ENCODE measurements at regions of chr7 and their contacts with region 1.

Region 1: GRCh38 chr7:30412810-30413504 is 65.6 kb downstream of the NOD1 start:
- DNase-seq: peak; percentile 68
- ATAC-seq: peak; percentile 97
- H3K4me3 ChIP-seq: no peak overlapping the region
- H3K27ac ChIP-seq: no peak overlapping the region
- H3K4me1 ChIP-seq: no peaks in the 10 kb centered on the region; a peak in 1 of 4 replicates
- H3K27me3 ChIP-seq: no peaks in the 10 kb centered on the region
- CTCF ChIP-seq: peak; percentile 34 to 77 (median 66); a peak in 5 of 6 replicates
- POLR2A ChIP-seq: no peak
- RAD21 ChIP-seq: peak; percentile 90

Region 2: DNA sequence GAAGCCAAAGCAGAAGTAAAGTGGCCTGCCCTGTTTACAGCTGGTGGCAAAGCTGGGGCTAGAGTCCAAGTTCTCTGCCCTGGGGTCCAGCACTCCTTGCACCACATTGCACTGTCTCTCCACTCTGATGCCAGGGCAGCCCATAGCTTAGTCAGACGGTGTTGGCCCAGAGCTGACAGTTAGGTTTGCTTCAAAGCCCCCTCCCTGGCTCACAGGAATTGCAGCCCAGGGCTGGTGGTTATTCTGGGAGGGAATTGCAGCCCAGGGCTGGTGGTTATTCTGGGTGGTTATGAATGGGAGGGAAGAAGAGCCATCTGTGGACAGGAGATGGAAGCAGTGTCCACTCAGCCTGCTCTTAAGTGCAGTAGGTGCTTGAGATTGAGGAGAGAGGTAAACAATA is 512.2 kb before region 1 on chr7:
- CTCF ChIA-PET with region 1: no interaction called
- POLR2A ChIA-PET with region 1: no interaction called
- RAD21 ChIA-PET with region 1: no interaction called
- intact Hi-C with region 1: no loop called
- DNase-seq: no peak
- ATAC-seq: no peak
- H3K4me3 ChIP-seq: no peak overlapping the region
- H3K27ac ChIP-seq: no peak overlapping the region
- H3K4me1 ChIP-seq: no peaks in the 10 kb centered on the region
- H3K27me3 ChIP-seq: no peaks in the 10 kb centered on the region
- CTCF ChIP-seq: no peak
- POLR2A ChIP-seq: no peak
- RAD21 ChIP-seq: no peak

Region 3: DNA sequence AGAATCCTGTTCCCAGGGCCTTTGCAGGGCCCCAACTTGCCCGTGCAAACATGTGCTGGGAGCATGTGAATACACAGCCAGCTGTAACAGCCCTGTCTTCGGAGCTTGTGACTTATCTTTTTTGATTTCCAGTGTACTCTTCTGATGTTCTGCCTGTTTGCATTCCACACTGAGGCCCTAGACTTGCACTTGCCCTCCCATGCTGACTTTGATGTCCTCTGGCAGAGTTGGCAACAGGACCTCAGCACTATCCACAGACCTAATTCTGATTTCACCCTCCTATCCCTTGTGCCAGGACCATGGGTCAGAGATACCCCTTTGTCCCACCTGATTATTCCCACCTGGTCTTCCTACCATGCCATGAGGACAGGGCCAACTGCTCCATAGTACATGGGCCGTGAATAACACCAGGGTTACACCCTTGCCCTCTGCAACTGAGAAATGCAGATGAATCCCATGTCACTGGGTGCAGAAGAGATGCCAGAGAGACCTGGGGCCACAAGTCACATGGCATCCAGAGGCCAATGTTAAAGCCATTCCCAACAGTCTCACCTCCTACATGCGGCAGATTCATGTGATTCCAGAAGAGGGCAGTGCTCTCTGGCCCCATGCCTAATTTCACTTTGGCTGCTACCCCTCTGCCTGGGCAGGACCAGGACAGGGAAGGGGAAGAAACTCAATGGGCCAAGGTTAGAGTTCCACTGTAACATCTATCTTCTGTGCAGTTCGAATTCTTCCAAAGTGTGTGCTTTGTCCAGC is 466.4 kb before region 1 on chr7:
- CTCF ChIA-PET with region 1: no interaction called
- POLR2A ChIA-PET with region 1: no interaction called
- RAD21 ChIA-PET with region 1: no interaction called
- intact Hi-C with region 1: loop called (anchors 10 kb)
- DNase-seq: peak; percentile 42
- ATAC-seq: peak; percentile 91
- H3K4me3 ChIP-seq: no peak overlapping the region
- H3K27ac ChIP-seq: no peak overlapping the region
- H3K4me1 ChIP-seq: no peaks in the 10 kb centered on the region
- H3K27me3 ChIP-seq: no peaks in the 10 kb centered on the region
- CTCF ChIP-seq: peak; percentile 55 to 59 (median 58); a peak in 5 of 6 replicates
- POLR2A ChIP-seq: no peak
- RAD21 ChIP-seq: peak; percentile 61

Region 4: DNA sequence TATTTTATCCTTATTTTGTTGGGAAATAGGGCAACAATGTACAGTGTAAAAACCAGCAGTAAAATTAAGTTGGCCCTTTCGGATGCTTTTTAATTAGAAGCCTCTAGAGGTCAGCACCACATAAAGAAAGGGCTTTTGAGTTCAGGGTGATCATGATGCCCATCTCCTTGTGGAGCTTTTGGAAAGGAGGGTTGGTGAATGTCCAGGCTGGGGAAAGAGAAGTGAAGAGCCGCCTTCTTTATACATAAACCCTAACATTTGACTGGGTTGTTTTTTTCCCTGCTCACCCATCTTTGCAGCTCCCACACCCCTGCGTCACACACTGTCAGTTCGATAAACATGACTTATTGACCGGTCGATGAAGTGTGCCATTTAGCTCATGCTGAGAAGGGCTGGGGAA is 248.4 kb before region 1 on chr7:
- CTCF ChIA-PET with region 1: interaction called, 4 read pairs
- POLR2A ChIA-PET with region 1: no interaction called
- RAD21 ChIA-PET with region 1: no interaction called
- intact Hi-C with region 1: loop called (anchors 1 kb)
- DNase-seq: peak; percentile 33
- ATAC-seq: peak; percentile 68
- H3K4me3 ChIP-seq: no peak overlapping the region
- H3K27ac ChIP-seq: no peak overlapping the region
- H3K4me1 ChIP-seq: peaks cover 0 to 12% of the 10 kb centered on the region in 2 experiments; a peak in 2 of 4 replicates
- H3K27me3 ChIP-seq: no peaks in the 10 kb centered on the region
- CTCF ChIP-seq: peak; percentile 53 to 73 (median 64); a peak in 5 of 6 replicates
- POLR2A ChIP-seq: no peak
- RAD21 ChIP-seq: peak; percentile 87

Region 5: GRCh38 chr7:30225863-30226613 is 186.9 kb before region 1 on chr7:
- CTCF ChIA-PET with region 1: interaction called, 3 read pairs
- POLR2A ChIA-PET with region 1: no interaction called
- RAD21 ChIA-PET with region 1: no interaction called
- intact Hi-C with region 1: loop called (anchors 1 kb)
- DNase-seq: peak; percentile 31
- ATAC-seq: peak; percentile 68
- H3K4me3 ChIP-seq: no peak overlapping the region; a peak in 1 of 4 replicates
- H3K27ac ChIP-seq: peak overlapping the region; percentile 26; the same call in 1 of the 2 replicates
- H3K4me1 ChIP-seq: peaks cover 15 to 23% of the 10 kb centered on the region in 2 experiments
- H3K27me3 ChIP-seq: no peaks in the 10 kb centered on the region
- CTCF ChIP-seq: no peak
- POLR2A ChIP-seq: no peak
- RAD21 ChIP-seq: peak; percentile 23; the same call in 1 of the 2 replicates

Region 6: DNA sequence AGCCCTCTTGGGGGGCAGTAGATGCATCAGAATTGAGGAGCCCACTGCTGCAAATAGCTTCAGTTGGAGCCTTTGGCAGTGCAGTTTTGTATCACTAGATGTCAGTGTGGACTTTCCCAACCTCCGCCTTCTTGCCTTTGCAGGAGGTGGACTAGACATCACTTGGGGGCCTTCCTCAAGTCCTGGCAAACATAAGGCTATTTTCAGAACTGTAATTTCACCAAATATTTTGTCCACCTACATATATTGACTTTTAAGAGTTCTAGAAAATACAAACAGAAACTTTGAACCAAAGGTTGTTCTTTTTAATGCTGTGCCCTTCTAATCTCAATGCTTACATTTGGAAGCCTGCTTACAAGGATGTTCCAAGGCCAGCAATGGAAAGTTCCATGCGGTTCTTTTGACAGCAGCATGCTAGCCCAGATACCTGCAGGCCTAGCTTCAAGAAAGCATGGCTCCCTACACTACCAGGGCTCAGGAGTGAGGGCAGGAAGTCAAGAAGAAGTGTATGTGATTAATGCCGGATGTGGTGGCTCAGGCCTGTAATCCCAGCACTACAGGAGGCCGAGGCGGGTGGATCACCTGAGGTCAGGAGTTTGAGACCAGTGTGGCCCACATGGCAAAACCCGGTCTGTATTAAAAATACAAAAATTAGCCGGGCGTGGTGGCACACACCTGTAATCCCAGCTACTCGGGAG is 136.6 kb before region 1 on chr7:
- CTCF ChIA-PET with region 1: interaction called, 6 read pairs
- POLR2A ChIA-PET with region 1: no interaction called
- RAD21 ChIA-PET with region 1: interaction called in 1 of 2 experiments, 4 read pairs
- intact Hi-C with region 1: loop called (anchors 1 kb)
- DNase-seq: peak; percentile 43
- ATAC-seq: peak; percentile 96
- H3K4me3 ChIP-seq: no peak overlapping the region
- H3K27ac ChIP-seq: no peak overlapping the region
- H3K4me1 ChIP-seq: no peaks in the 10 kb centered on the region
- H3K27me3 ChIP-seq: no peaks in the 10 kb centered on the region
- CTCF ChIP-seq: peak; percentile 68 to 75 (median 75)
- POLR2A ChIP-seq: no peak
- RAD21 ChIP-seq: peak; percentile 89

Region 7: DNA sequence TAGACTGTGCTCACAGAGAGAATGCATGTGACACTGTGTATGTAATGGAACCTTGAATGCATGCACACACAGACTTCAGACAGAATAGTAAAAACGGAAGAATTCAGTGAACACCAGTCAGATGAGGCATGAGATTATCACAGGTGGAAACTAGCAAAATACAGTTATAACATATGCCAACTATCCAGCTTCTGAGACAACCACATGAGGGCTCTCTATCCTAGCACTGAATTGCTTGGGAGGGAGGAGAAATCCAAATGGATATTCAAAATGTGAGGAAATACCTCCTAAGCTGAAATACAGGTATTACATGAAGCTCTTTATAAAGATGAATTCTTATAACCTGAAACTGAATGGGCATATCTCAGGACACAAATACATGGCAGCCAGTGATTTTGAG is 212.3 kb after region 1 on chr7:
- CTCF ChIA-PET with region 1: no interaction called
- POLR2A ChIA-PET with region 1: no interaction called
- RAD21 ChIA-PET with region 1: no interaction called
- intact Hi-C with region 1: no loop called
- DNase-seq: no peak
- ATAC-seq: 0 out of 2 replicates have a peak, but pooled peaks have one; percentile 32
- H3K4me3 ChIP-seq: no peak overlapping the region
- H3K27ac ChIP-seq: no peak overlapping the region
- H3K4me1 ChIP-seq: no peaks in the 10 kb centered on the region
- H3K27me3 ChIP-seq: no peaks in the 10 kb centered on the region
- CTCF ChIP-seq: 0 out of 6 replicates have a peak, but pooled peaks of 1 of the 3 experiments have one; percentile 10
- POLR2A ChIP-seq: no peak
- RAD21 ChIP-seq: peak; percentile 20; the same call in 1 of the 2 replicates

Measured in HCT116 (cell line).